Activated CD8-positive, alpha-beta T cell treated with anti-CD3 and anti-CD28 coated beads, Interleukin-2, amount 10 ng/mL, durations not matched to agents 7 days and 5 days (primary cell): ENCODE measurements at regions of chr19 and their contacts with region 1.

Region 1: DNA sequence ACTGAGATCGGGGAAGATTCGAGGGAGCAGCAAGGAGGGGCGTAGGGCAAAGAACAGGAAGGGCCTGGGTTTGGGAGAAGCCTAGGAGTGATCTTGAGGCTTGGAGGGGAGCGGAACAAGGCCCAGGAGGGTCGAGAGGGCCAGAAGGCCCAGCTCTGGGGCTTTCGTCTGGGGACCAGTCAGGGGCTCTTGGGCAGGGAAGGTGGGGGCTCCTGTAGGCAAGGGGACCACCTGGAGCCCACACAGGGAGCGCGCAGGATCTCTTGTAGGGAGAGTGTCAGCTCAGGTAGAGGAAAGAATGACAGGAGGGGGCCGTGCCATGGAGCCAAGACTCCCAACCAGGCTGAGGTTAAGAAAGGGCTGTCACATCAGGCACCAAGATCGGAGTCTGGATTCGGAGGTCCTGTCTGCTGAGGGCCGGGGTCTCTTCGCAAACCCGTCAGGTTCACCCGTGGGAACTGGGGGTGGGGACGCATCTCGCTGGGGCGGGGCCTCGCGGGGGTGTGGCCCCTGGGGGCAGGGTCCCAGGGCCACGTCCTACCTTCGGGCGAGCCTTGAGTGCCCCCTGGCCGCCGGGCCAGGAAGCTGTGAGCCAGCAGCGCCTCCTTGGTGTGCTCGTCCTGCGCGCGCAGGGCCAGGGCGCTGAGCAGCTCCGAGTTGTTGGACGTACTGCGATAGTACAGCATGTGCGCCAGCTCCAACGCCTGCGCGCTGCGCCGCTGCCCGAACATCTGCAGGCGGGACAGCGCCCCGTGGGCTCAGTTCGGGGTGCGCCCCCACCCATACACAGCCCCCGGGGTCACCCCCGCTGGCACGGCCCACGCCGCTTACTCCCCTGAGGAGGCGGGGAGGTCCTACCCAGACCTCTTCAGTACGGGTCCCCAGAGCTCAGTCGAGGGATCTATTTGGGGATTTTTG is 8.4 kb downstream of the EMP3 start:
- DNase-seq: peak; percentile 95
- ATAC-seq: peak; percentile 73
- H3K4me3 Mint-ChIP-seq: peak overlapping the region; percentile 96
- H3K27ac Mint-ChIP-seq: peak overlapping the region; percentile 90
- H3K4me1 Mint-ChIP-seq: peaks cover 56% of the 10 kb centered on the region
- H3K27me3 Mint-ChIP-seq: no peaks in the 10 kb centered on the region

Region 2: DNA sequence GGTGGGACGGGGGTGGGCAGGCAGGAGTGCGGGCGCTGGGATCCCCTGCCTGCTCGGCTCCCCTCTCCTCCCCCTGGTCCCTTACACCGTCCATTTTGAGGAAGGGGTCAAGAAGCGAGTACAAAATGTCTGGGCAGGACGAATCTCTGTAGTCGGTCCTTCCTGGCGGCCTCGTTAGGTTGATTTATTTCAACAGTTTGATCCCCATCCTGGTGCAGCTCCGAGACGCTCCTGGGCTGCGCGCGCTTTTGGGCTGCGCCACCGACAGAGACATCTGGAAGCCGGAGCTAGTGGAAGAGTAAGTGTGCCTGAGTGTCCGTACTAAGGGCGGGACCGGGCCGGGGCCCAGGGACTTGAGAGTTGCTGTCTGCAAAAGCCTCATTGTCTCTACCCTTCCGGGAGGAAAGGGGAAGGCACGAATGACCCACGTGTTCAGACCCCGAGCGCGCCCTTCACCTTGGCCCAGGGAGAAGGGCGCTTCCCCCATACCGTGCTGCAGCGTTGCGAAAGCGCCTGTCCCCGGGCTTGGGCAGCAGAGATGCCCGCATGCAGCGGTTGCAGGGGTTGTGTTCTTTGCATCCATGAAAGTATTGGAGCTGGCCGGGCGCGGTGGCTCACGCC is 62.1 kb before region 1 on chr19:
- CTCF ChIA-PET with region 1: interaction called, 27 read pairs
- POLR2A ChIA-PET with region 1: no interaction called
- DNase-seq: peak; percentile 31
- ATAC-seq: peak; percentile 59
- H3K4me3 Mint-ChIP-seq: peak overlapping the region; percentile 77
- H3K27ac Mint-ChIP-seq: peak overlapping the region; percentile 66
- H3K4me1 Mint-ChIP-seq: peaks cover 26% of the 10 kb centered on the region
- H3K27me3 Mint-ChIP-seq: peaks cover 9% of the 10 kb centered on the region

Region 3: DNA sequence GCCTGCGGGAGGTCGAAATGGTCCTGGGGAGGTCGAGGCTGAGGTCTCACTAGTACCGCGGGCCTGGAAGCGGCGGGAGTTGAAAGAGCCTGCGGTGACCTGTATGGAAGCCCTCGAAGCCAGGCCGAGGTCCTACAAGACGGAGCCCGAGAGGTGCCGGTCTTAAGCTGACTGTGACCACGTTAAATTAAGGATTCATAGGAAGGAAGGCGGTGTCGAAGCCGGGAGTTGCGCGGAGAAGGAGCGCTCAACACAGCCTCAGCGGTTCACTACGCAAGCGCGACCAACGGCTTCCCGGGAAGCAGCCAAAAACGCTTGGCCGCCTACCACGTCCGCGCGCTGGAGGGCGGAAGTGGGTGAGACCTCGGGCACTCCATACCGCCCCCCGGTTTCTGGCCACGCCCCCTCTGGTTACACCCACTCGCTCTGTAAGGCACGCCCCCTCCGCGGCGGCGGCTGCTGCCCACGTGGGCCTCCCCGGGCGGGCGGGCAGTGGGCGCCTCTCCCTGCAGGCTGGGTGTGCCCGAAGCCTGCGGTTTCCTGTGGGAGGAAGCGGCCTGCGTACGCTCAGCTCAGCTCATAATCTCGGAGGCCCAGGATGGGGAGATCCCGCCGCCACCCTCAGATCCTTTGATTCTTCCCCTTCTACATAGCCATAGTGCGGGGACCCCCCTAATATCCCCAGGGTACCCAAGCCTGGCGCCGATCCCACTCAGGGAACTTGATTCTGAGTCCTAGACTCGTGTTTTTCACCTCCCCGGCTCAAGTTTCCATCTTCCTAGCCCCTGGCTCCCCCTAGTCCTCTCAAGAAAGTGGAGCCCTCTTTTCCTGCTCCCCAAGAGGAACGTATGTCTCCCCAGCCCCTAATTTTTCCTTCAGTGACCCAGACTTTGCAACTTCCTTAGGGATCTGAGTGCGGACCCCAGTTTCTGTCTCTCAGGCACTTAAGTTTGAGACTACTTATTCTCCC is 11.8 kb before region 1 on chr19:
- CTCF ChIA-PET with region 1: interaction called, 496 read pairs
- POLR2A ChIA-PET with region 1: interaction called, 125 read pairs
- DNase-seq: peak; percentile 99
- ATAC-seq: peak; percentile 70
- H3K4me3 Mint-ChIP-seq: peak overlapping the region; percentile 91
- H3K27ac Mint-ChIP-seq: peak overlapping the region; percentile 98
- H3K4me1 Mint-ChIP-seq: peaks cover 60% of the 10 kb centered on the region
- H3K27me3 Mint-ChIP-seq: no peaks in the 10 kb centered on the region

Region 4: GRCh38 chr19:48363810-48364563 is 30.3 kb after region 1 on chr19 and contains the starts of genes SYNGR4 and TMEM143:
- CTCF ChIA-PET with region 1: interaction called, 25 read pairs
- POLR2A ChIA-PET with region 1: interaction called, 10 read pairs
- DNase-seq: peak; percentile 99
- ATAC-seq: peak; percentile 94
- H3K4me3 Mint-ChIP-seq: peak within 1 kb of the TSS; percentile 86
- H3K27ac Mint-ChIP-seq: peak within 1 kb of the TSS; percentile 97
- H3K4me1 Mint-ChIP-seq: peaks cover 21% of the 10 kb centered on the region
- H3K27me3 Mint-ChIP-seq: no peaks in the 10 kb centered on the region
- total RNA-seq, gene SYNGR4: not detected
- total RNA-seq, gene TMEM143: 17.1 to 19.4 TPM

Region 5: DNA sequence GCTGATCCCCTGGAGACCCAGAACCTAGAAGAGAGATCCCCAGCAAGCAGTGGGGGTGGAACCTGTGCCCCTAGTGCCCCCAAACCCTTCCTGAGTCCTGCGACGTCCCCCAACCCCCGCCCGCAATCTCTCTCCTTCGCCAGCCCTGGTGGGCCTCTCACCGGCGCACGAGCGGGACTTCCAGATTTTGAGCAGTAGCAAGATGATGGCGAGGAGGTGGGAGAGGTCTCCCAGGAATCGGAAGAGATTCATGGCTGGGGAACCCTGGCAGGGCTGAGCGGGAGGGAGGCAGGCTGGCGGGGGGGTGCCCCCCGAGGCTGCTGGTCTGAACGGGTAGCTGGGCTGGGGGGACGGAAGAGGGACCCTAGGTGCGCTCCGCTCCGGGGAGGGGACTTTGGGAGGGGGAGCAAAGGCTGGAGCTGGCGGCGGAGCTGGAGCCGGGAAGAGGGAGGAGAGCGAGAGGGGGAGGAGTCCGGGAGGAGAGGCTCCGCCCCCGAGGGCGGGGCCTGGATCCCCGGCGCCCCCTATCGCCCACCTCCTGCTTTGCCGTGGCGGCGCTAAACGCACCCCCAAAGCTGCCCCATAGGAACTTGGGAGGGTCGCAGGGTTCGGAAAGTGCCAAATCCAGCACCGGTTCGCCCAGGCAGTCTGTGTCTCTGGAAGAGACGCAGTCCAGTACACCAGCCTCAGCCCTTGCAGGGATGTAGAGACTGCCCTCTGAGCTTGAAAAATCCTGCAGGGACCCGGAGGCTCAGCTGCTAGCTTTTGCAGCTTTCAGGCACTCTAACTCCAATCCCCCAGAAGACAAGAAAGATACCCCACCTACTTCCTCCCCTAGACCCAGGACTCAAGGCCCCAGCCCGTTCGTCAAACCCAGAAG is 57.6 kb after region 1 on chr19 and contains the start of gene KDELR1:
- CTCF ChIA-PET with region 1: interaction called, 23 read pairs
- POLR2A ChIA-PET with region 1: no interaction called
- DNase-seq: peak; percentile 76
- ATAC-seq: peak; percentile 81
- H3K4me3 Mint-ChIP-seq: peak within 1 kb of the TSS; percentile 95
- H3K27ac Mint-ChIP-seq: peak within 1 kb of the TSS; percentile 93
- H3K4me1 Mint-ChIP-seq: peaks cover 30% of the 10 kb centered on the region
- H3K27me3 Mint-ChIP-seq: peaks cover 39% of the 10 kb centered on the region
- total RNA-seq, gene KDELR1: 70.3 to 71.3 TPM

Region 6: GRCh38 chr19:48543121-48544056 is 209.7 kb after region 1 on chr19:
- CTCF ChIA-PET with region 1: no interaction called
- POLR2A ChIA-PET with region 1: no interaction called
- DNase-seq: no peak
- ATAC-seq: no peak
- H3K4me3 Mint-ChIP-seq: no peak overlapping the region
- H3K27ac Mint-ChIP-seq: no peak overlapping the region
- H3K4me1 Mint-ChIP-seq: no peaks in the 10 kb centered on the region
- H3K27me3 Mint-ChIP-seq: no peaks in the 10 kb centered on the region

Region 7: DNA sequence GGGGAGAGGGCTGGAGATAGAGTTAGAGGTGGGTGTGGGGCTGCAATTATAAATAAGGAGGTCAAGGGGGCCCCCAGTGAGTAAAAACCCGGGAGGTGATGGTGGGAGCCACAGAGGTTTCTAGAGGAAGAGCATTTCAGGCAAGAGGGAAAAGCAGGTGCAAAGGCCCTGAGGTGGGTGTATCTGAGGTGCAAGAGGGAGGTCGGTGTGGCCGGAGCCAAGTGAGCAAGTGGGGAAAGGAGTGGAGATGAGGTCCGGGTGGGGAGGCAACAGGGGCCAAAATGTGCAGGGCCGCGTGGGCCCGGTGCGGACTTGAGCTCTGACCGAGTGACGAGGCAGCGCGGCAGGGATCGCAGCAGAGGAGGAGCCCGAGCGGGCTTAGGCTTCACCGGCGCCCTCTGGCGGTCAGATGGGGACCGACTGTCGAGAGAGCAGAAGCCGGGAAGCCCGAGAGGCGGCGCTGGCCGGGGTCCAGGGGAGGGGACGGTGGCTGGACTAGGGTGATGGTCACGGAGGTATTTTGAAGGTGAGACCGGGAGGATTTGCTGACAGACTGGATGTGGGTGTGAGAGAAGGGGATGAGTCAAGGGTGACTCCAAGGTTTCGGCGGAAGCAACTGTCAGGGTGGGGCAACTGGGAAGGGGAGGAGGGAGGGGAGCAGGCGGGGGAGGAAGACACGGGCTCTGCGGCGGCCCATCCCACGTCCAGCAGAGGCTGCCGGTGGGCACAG is 255.1 kb after region 1 on chr19:
- CTCF ChIA-PET with region 1: interaction called, 15 read pairs
- POLR2A ChIA-PET with region 1: no interaction called
- DNase-seq: peak; percentile 92
- ATAC-seq: peak; percentile 94
- H3K4me3 Mint-ChIP-seq: peak overlapping the region; percentile 77
- H3K27ac Mint-ChIP-seq: peak overlapping the region; percentile 87
- H3K4me1 Mint-ChIP-seq: peaks cover 27% of the 10 kb centered on the region
- H3K27me3 Mint-ChIP-seq: no peaks in the 10 kb centered on the region

Region 8: DNA sequence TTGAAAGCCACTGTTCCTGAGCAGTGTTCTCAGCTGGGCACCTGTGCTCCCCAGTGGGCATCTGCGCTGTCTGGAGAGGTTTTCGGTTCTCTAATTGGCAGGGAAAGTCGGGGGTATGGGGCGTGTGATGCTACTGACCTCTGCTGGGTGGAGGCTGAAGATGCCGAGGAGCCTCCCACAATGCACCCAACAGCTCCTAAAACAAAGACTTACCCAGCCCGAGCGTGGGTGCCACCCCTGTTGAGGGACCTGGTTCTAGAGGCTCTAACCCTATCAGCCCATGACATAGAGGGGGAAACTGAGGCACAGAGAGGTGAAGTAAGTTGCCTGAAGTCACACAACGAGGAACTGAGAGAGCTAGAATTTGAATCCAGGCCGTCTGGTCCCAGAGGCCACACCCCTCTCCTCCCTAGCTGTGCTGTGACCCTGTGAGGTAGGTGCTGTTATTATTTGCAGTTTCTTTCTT is 275.1 kb after region 1 on chr19:
- CTCF ChIA-PET with region 1: interaction called, 13 read pairs
- POLR2A ChIA-PET with region 1: no interaction called
- DNase-seq: peak; percentile 71
- ATAC-seq: peak; percentile 79
- H3K4me3 Mint-ChIP-seq: no peak overlapping the region
- H3K27ac Mint-ChIP-seq: peak overlapping the region; percentile 46
- H3K4me1 Mint-ChIP-seq: peaks cover 4% of the 10 kb centered on the region
- H3K27me3 Mint-ChIP-seq: no peaks in the 10 kb centered on the region